Testis (tissue), 5 donors: ENCODE measurements at regions of chr2 and their contacts with region 1.

Region 1: DNA sequence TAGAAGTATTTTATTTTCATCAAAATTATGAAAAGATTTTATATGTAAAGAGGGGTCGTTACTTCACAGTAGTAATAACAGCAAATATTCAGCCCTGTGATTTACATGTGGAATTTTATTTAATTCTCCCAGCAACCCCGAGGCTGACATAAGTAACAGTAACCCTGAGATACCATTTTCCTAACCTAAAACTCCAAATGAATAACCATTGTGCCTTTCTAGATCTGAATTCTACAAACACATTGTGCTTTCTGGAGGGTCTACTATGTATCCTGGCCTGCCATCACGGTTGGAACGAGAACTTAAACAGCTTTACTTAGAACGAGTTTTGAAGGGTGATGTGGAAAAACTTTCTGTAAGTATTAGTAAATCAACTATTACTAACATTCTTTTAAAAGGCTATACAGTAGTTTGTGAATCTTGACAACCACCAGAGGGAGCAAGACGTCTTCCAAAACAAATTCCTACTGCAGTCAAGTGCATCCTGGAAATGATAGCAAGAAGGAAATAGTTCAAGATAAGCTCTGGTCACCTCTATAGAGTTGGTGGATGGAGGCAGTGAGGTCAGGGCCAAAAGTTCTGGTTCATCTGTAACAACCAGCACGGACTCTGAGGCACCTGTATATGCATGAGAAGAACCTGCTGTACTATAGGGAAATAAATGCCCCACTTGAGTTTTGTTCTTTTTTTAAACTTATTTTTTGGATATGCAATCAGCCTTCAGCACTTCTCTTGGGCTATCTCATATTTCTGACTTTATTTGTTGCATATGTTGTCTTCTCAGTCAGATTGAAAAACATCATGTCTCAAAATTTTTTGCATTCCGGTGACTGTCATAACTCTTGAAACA is 37.4 kb downstream of the ACTR2 start:
- DNase-seq: no peak
- H3K4me3 ChIP-seq: no peak overlapping the region
- H3K27ac ChIP-seq: no peak overlapping the region
- H3K4me1 ChIP-seq: no peaks in the 10 kb centered on the region
- H3K27me3 ChIP-seq: no peaks in the 10 kb centered on the region
- CTCF ChIP-seq: peak; percentile 65 to 77 (median 77)
- POLR2A ChIP-seq: no peak

Region 2: DNA sequence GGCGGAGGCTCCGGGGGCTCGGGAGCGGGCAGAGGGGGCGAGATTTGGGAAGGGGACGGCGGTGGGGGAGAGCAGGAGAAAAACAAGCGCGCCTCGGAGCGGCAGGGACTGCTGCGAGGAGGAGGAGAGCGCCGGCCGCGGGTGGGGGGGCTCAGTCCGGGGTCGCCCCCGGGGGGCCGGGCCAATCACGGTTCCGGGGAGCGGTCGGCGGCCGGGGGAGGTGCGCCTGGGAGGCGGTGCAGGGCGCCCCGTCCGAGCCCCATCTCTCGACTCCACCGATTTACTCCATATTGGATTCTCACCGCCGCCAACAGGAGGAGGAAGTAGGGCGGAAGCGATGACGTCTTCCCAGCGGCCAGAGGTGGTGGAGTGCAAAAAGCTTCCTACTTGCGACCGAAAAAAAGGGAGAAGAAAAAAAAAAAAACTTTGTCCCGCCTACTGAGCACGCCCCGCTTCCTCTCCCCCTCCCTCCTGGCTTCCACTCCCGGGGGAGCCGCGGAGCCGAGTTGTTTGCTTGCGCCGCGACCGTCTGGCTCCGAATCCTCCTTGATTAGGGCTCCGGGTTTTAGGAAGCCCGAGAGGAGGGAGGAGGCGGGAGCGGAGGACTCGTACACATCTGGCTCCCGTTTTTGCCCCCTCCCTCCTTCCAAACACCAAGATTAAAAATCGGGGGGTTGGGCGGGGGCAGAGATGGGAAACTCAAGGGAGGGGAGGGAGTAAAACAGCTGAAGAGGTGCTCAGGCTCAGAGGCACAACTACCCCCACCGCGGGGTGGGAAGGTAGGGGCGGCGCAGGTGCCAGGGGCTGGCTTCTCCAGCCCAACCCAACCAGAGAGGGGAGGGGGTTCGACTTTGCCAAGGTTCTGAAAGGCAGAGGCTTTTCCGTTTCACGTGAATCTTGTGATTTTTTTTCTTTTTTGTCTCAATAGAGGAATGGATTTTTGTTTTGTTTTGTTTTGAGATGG is 167.5 kb after region 1 on chr2 and contains the start of gene SPRED2:
- intact Hi-C with region 1: loop called (anchors 5 kb)
- DNase-seq: peak; percentile 94
- H3K4me3 ChIP-seq: peak within 1 kb of the TSS; percentile 78 to 94
- H3K27ac ChIP-seq: peak within 1 kb of the TSS; percentile 86 to 87
- H3K4me1 ChIP-seq: peaks cover 16% of the 10 kb centered on the region
- H3K27me3 ChIP-seq: no peaks in the 10 kb centered on the region
- CTCF ChIP-seq: peak in 1 of 3 experiments; percentile 10
- POLR2A ChIP-seq: no peak
- total RNA-seq, gene SPRED2: 10.0 to 14.1 TPM

Region 3: DNA sequence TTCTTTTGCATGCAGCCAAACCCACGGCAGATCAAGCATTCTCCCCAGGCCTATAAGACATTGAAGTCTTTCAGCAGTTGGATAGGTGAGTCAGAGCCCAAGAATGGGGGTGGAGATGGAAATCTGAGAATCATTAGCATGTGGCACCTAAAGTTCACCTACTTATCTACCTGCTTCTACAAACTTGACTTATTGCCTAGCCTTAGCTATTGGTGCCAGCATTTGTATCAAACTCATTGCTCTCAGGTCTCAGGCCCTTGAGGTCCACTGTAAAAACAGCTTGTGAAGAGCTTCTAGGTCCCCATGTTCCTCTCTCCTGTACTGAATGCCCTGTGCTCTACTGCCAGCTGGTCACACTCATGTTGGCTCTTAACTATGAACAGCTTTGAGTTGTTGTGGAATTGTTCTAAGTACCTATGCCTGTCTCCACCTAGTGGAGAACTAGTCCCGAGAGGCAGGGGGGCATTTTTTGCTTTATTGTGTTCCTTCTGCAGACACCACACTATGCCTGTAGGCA is 445.8 kb after region 1 on chr2:
- intact Hi-C with region 1: no loop called
- DNase-seq: no peak
- H3K4me3 ChIP-seq: no peak overlapping the region
- H3K27ac ChIP-seq: no peak overlapping the region
- H3K4me1 ChIP-seq: no peaks in the 10 kb centered on the region
- H3K27me3 ChIP-seq: no peaks in the 10 kb centered on the region
- CTCF ChIP-seq: no peak
- POLR2A ChIP-seq: no peak